A673 (cell line): ENCODE measurements at regions of chr12 and their contacts with region 1.

Region 1: GRCh38 chr12:110563702-110564640 is 19.1 kb downstream of the PPTC7 start:
- DNase-seq: no peak
- H3K4me3 ChIP-seq: no peak overlapping the region
- H3K27ac ChIP-seq: peak overlapping the region; percentile 12
- H3K4me1 ChIP-seq: peaks cover 55% of the 10 kb centered on the region
- H3K27me3 ChIP-seq: no peaks in the 10 kb centered on the region
- CTCF ChIP-seq: no peak

Region 2: GRCh38 chr12:110382683-110383082 is 181.3 kb before region 1 on chr12:
- CTCF ChIA-PET with region 1: no interaction called
- POLR2A ChIA-PET with region 1: interaction called, 15 read pairs
- intact Hi-C with region 1: no loop called
- DNase-seq: no peak
- H3K4me3 ChIP-seq: no peak overlapping the region
- H3K27ac ChIP-seq: no peak overlapping the region
- H3K4me1 ChIP-seq: no peaks in the 10 kb centered on the region
- H3K27me3 ChIP-seq: no peaks in the 10 kb centered on the region
- CTCF ChIP-seq: no peak